ENCODE measurements at regions of chr1 and their contacts with region 1.

Region 1: GRCh38 chr1:31815752-31816500 is at the start of gene SPOCD1:
- DNase-seq: peak; percentile 87
- H3K4me3 ChIP-seq: peak within 1 kb of the TSS; percentile 27
- H3K27ac ChIP-seq: peak within 1 kb of the TSS; percentile 66
- H3K4me1 ChIP-seq: peaks cover 42% of the 10 kb centered on the region
- CTCF ChIP-seq: peak; percentile 95
- total RNA-seq, gene SPOCD1: 0.60 and 0.85 TPM in 2 replicates

Region 2: DNA sequence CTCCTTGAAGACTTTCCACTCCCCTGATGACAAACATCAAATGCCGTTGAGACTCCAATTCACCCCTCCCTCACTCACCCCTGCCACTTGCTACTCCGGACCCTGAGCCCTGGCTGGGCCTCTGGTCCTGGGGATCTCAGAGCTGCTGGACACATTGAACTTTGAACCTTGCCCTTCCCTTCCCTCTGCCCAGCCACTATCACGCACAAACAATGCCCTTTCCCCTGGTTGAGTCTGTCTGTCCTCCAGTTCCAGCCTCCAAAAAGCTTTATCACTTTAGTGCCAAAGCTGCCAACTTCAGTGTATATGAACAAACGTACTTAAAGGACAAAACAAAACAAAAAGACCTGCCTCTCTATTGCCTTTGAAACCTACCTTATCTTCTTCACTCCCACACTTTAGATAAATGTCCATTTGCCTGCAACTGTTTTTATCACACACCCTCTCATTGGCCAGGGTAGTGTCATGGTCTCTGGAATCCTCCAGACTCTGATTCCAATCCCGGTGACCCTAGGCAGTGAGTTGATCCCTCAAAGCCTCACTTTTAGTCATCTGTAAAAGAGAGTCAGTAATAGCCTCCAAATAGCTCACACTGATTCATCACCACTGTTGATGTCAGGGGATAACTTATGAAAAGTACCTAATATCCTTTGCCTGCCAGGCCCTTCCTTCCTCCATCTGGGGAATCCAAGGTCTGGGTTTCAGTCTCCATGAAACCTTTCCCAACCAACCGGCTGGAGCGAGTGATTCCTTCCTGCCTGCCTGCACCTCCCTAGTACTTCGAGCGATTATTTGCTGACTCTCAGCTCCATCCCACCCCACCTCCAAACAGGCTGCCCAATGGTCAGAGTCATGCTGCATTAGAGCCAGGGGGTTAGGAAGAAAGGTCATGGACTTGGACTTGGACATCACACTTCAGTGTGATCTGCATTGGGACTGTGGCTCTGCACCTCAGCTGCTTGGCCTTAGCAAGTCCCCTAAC is 15.8 kb after region 1 on chr1:
- CTCF ChIA-PET with region 1: no interaction called
- POLR2A ChIA-PET with region 1: interaction called, 17 read pairs
- intact Hi-C with region 1: no loop called
- DNase-seq: no peak
- H3K4me3 ChIP-seq: no peak overlapping the region
- H3K27ac ChIP-seq: no peak overlapping the region
- H3K4me1 ChIP-seq: peaks cover 44% of the 10 kb centered on the region
- CTCF ChIP-seq: no peak

Region 3: DNA sequence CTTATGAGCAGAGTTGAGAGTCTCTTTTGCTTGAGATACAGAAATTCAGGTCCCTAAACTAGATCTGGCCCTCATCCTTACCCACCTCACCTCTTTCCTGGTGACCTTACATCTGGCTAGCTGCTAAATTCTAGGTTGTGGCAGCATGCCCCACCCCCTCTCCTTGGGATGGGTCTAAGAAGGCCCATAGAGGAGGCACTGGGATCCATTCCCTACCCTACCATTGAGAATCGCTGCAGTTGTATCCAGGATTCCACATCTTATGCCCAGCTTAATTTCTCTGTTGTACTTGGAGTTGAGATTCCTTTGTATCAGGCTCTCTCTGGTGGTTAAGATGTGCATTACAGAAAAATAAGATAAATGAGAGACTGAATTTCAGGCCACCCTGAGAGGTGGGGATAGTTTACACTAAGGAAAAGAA is 247.3 kb after region 1 on chr1:
- CTCF ChIA-PET with region 1: no interaction called
- POLR2A ChIA-PET with region 1: no interaction called
- intact Hi-C with region 1: loop called (anchors 10 kb)
- DNase-seq: peak; percentile 61
- H3K4me3 ChIP-seq: no peak overlapping the region
- H3K27ac ChIP-seq: no peak overlapping the region
- H3K4me1 ChIP-seq: peaks cover 6% of the 10 kb centered on the region
- CTCF ChIP-seq: peak; percentile 83